HepG2 (cell line): ENCODE measurements at regions of chr20 and their contacts with region 1.

Region 1: GRCh38 chr20:58209652-58210397 is 18.6 kb downstream of the ANKRD60 start:
- DNase-seq: peak; percentile 68
- ATAC-seq: peak; percentile 86
- H3K4me3 ChIP-seq: no peak overlapping the region
- H3K27ac ChIP-seq: no peak overlapping the region
- H3K4me1 ChIP-seq: no peaks in the 10 kb centered on the region
- H3K27me3 ChIP-seq: peaks cover 9 to 69% of the 10 kb centered on the region in 2 experiments; a peak in 4 of 5 replicates
- CTCF ChIP-seq: peak; percentile 100
- EP300 ChIP-seq: peak in 1 of 2 experiments; percentile 76; a peak in 1 of 4 replicates
- POLR2A ChIP-seq: no peak
- RAD21 ChIP-seq: peak; percentile 100

Region 2: DNA sequence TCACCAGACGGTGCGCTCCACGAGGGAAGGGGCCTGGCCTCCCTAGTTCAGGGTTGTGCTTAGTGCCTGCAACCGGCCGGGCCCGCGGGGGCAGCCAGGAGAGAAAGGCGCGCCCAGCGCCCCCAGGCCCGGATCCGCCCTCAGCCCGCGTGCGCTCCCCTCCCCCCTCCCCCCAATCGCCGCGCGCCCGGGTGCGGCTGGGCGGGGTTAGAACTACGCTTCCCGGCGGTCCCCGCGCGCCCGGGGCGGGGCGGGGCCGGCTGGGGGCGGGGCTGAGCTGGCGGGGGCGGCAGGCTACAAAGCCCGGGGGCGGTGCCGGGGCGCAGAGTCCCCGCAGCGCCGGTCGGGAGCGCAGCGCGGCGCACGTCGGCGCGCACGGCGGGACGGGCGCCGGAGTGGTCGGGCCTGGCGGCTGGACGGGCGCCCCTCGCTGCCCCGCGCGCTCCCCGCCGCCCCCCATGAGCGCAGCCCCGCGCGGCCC is 818.7 kb before region 1 on chr20 and contains the start of gene RBM38:
- CTCF ChIA-PET with region 1: no interaction called
- POLR2A ChIA-PET with region 1: no interaction called
- in situ Hi-C with region 1: loop called (anchors 25 kb)
- intact Hi-C with region 1: no loop called
- DNase-seq: peak; percentile 56
- ATAC-seq: peak; percentile 72
- H3K4me3 ChIP-seq: peak within 1 kb of the TSS; percentile 76 to 97 (median 96)
- H3K27ac ChIP-seq: peak within 1 kb of the TSS; percentile 58
- H3K4me1 ChIP-seq: peaks cover 37% of the 10 kb centered on the region
- H3K27me3 ChIP-seq: no peaks in the 10 kb centered on the region
- CTCF ChIP-seq: no peak
- EP300 ChIP-seq: no peak
- POLR2A ChIP-seq: peak in 1 of 2 experiments; percentile 46; a peak in 2 of 4 replicates
- RAD21 ChIP-seq: no peak
- total RNA-seq, gene RBM38: 29.6 and 34.2 TPM in 2 replicates

Region 3: DNA sequence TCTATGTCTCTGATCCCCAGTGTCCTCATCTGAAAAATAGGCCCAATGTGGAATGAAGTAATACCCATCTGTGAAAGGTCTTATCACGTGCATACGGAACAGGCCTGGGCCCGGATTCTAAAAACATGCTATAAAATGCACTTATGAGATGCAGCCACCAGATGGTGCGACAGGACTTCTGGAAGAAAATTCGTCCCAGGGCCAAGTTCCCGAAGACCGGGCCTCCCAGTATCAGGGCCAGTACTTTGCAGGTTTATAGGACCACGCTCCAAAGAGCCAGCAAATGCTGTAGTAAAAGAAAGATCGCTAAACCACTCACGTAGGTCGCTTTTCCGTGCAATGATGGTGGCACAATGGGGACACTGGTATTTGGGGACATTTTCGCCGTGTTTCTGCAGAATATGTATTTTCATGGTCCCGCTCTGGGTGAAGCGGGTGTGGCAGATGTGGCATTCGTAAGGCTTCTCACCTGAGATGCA is 695.5 kb before region 1 on chr20:
- CTCF ChIA-PET with region 1: interaction called, 39 read pairs
- POLR2A ChIA-PET with region 1: no interaction called
- in situ Hi-C with region 1: loop called (anchors 5 kb)
- intact Hi-C with region 1: loop called (anchors 5 kb)
- DNase-seq: peak; percentile 73
- ATAC-seq: peak; percentile 87
- H3K4me3 ChIP-seq: no peak overlapping the region
- H3K27ac ChIP-seq: no peak overlapping the region
- H3K4me1 ChIP-seq: 0 out of 2 replicates have a peak, but pooled peaks cover 4% of the 10 kb centered on the region
- H3K27me3 ChIP-seq: peaks cover 0 to 43% of the 10 kb centered on the region in 2 experiments; a peak in 3 of 5 replicates
- CTCF ChIP-seq: peak; percentile 95
- EP300 ChIP-seq: no peak
- POLR2A ChIP-seq: no peak
- RAD21 ChIP-seq: peak; percentile 98

Region 4: GRCh38 chr20:57596998-57597939 is 612.6 kb before region 1 on chr20:
- CTCF ChIA-PET with region 1: interaction called, 222 read pairs
- POLR2A ChIA-PET with region 1: no interaction called
- in situ Hi-C with region 1: loop called (anchors 5 kb)
- intact Hi-C with region 1: loop called (anchors 1 kb)
- DNase-seq: peak; percentile 43
- ATAC-seq: peak; percentile 75
- H3K4me3 ChIP-seq: peak overlapping the region in 1 of 3 experiments; percentile 27; a peak in 1 of 6 replicates
- H3K27ac ChIP-seq: no peak overlapping the region
- H3K4me1 ChIP-seq: peaks cover 25% of the 10 kb centered on the region
- H3K27me3 ChIP-seq: peaks cover 0 to 36% of the 10 kb centered on the region in 2 experiments; a peak in 4 of 5 replicates
- CTCF ChIP-seq: peak; percentile 98
- EP300 ChIP-seq: 0 out of 4 replicates have a peak, but pooled peaks of 1 of the 2 experiments have one; percentile 16
- POLR2A ChIP-seq: no peak
- RAD21 ChIP-seq: peak; percentile 97

Region 5: GRCh38 chr20:57622579-57623377 is 587.0 kb before region 1 on chr20:
- CTCF ChIA-PET with region 1: interaction called, 26 read pairs
- POLR2A ChIA-PET with region 1: no interaction called
- in situ Hi-C with region 1: no loop called
- intact Hi-C with region 1: no loop called
- DNase-seq: peak; percentile 41
- ATAC-seq: peak; percentile 92
- H3K4me3 ChIP-seq: no peak overlapping the region
- H3K27ac ChIP-seq: no peak overlapping the region
- H3K4me1 ChIP-seq: no peaks in the 10 kb centered on the region
- H3K27me3 ChIP-seq: peaks cover 2 to 58% of the 10 kb centered on the region in 2 experiments; a peak in 4 of 5 replicates
- CTCF ChIP-seq: peak; percentile 88
- EP300 ChIP-seq: no peak
- POLR2A ChIP-seq: no peak
- RAD21 ChIP-seq: peak; percentile 68

Region 6: GRCh38 chr20:57654363-57654997 is 555.3 kb before region 1 on chr20:
- CTCF ChIA-PET with region 1: interaction called, 46 read pairs
- POLR2A ChIA-PET with region 1: no interaction called
- in situ Hi-C with region 1: no loop called
- intact Hi-C with region 1: loop called (anchors 1 kb)
- DNase-seq: peak; percentile 42
- ATAC-seq: peak; percentile 74
- H3K4me3 ChIP-seq: no peak overlapping the region
- H3K27ac ChIP-seq: no peak overlapping the region
- H3K4me1 ChIP-seq: peaks cover 13% of the 10 kb centered on the region
- H3K27me3 ChIP-seq: peaks cover 35 to 97% of the 10 kb centered on the region in 2 experiments
- CTCF ChIP-seq: peak; percentile 92
- EP300 ChIP-seq: no peak
- POLR2A ChIP-seq: no peak
- RAD21 ChIP-seq: peak; percentile 69

Region 7: DNA sequence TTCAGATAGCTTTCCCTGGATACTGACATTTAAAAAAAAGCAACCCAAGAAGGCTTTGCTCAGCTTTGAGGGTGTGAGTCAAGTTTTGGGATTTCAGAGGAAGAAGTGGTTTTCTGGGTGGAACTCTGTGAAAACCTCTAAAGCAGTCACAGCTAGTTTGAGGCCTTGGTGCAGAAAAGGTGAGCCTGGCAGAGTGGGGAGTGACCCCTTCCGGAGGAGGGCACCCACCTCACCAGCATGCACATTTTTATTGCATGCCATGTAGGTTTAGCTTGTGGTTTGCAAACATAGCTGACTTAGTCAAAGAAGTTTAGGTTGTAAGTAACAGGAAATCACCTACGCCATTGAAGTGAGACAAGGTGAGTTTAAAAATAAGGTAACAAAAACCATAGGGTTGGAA is 353.2 kb before region 1 on chr20:
- CTCF ChIA-PET with region 1: no interaction called
- POLR2A ChIA-PET with region 1: no interaction called
- in situ Hi-C with region 1: no loop called
- intact Hi-C with region 1: no loop called
- DNase-seq: no peak
- ATAC-seq: no peak
- H3K4me3 ChIP-seq: no peak overlapping the region
- H3K27ac ChIP-seq: no peak overlapping the region
- H3K4me1 ChIP-seq: no peaks in the 10 kb centered on the region
- H3K27me3 ChIP-seq: no peaks in the 10 kb centered on the region
- CTCF ChIP-seq: no peak
- EP300 ChIP-seq: no peak
- POLR2A ChIP-seq: no peak
- RAD21 ChIP-seq: no peak

Region 8: GRCh38 chr20:58192567-58192966 is 17.3 kb before region 1 on chr20:
- CTCF ChIA-PET with region 1: interaction called, 20 read pairs
- POLR2A ChIA-PET with region 1: no interaction called
- in situ Hi-C with region 1: no loop called
- intact Hi-C with region 1: no loop called
- DNase-seq: no peak
- ATAC-seq: peak; percentile 41; the same call in 2 of the 3 replicates
- H3K4me3 ChIP-seq: no peak overlapping the region
- H3K27ac ChIP-seq: no peak overlapping the region
- H3K4me1 ChIP-seq: no peaks in the 10 kb centered on the region
- H3K27me3 ChIP-seq: peaks cover 0 to 14% of the 10 kb centered on the region in 2 experiments; a peak in 2 of 5 replicates
- CTCF ChIP-seq: peak; percentile 62
- EP300 ChIP-seq: no peak
- POLR2A ChIP-seq: no peak
- RAD21 ChIP-seq: no peak